ENCODE measurements at regions of chr17 and their contacts with region 1.

Region 1: DNA sequence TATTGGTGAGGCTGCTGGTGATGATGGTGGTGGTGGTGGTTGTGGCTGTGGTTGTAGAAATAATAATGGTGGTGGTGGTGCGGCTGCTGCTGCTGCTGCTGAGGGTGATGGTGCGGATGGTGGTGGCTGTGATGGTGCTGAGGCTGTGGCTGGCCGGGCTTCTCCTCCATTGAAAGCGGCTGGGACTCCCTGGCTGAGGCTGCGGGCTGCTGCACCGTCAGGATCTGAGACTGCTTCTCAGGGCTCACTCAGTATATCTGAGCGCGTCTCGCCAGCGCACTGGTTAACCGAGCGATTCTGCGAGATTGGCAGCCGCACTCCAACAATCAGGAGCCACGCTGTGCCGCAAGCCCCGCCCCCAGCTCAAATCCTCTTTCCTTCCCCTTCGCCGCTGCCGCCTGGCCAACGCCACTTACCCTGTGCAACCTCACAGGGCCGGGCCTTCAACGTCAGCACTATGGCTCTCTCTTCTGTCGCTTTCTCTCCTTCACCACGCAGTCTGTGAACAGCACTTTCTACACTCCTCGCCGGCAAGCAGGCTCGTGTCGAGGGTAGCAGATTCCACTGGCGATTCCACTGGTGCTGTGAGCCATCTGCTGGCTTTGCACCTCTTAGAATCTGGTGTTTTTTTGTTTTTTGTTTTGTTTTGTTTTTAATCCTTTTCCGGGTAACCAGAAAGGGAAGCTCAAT is at the start of gene NUFIP2:
- DNase-seq: peak; percentile 99
- ATAC-seq: peak; percentile 84
- H3K4me3 ChIP-seq: peak within 1 kb of the TSS; percentile 89 to 95 (median 91)
- H3K4me3 Mint-ChIP-seq: peak within 1 kb of the TSS; percentile 97
- H3K27ac ChIP-seq: peak within 1 kb of the TSS; percentile 82 to 94
- H3K27ac Mint-ChIP-seq: peak within 1 kb of the TSS; percentile 97
- H3K4me1 ChIP-seq: peaks cover 30 to 34% of the 10 kb centered on the region in 2 donors
- H3K4me1 Mint-ChIP-seq: peaks cover 30% of the 10 kb centered on the region
- H3K27me3 ChIP-seq: no peaks in the 10 kb centered on the region
- H3K27me3 Mint-ChIP-seq: no peaks in the 10 kb centered on the region
- CTCF ChIP-seq: no peak
- total RNA-seq, gene NUFIP2: 76.5 and 83.5 TPM in 2 replicates

Region 2: GRCh38 chr17:29124117-29124924 is 169.7 kb before region 1 on chr17:
- CTCF ChIA-PET with region 1: interaction called, 16 read pairs
- POLR2A ChIA-PET with region 1: no interaction called
- intact Hi-C with region 1: no loop called
- DNase-seq: peak; percentile 63
- ATAC-seq: peak; percentile 84
- H3K4me3 ChIP-seq: no peak overlapping the region
- H3K4me3 Mint-ChIP-seq: no peak overlapping the region
- H3K27ac ChIP-seq: no peak overlapping the region
- H3K27ac Mint-ChIP-seq: peak overlapping the region; percentile 7
- H3K4me1 ChIP-seq: peaks cover 0 to 4% of the 10 kb centered on the region in 2 donors
- H3K4me1 Mint-ChIP-seq: no peaks in the 10 kb centered on the region
- H3K27me3 ChIP-seq: no peaks in the 10 kb centered on the region
- H3K27me3 Mint-ChIP-seq: no peaks in the 10 kb centered on the region
- CTCF ChIP-seq: peak; percentile 60

Region 3: DNA sequence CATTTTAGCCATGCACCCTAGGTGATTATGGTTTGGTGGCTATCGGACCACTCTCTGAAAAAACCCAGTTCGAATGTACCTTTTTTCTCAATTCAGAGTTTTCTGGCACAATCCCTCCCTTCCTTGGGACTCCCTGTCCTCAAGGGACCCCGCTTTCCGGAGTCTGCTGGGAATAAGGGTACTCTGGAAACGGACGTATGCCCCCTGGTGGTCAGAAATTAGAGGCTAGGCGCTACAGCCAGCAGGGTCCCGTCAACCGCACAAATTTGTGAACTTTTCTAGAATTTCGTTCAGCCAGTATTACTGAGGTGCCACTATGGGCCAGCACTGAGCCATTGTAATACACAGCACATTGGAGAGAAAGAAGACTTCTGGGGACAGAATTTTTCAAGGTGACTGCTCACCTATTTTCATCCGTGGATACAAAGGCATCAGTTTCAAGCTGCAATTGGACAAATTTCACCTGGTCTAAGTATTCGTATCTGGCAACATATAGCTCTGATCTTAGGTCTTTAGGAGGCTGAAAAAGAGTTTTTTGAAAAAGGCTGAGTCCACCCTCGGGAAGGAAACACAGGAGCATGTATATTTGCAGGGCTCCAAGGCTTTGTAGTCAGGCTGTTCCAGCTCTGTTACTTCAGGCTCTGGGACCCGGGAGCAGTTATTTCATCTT is 74.5 kb before region 1 on chr17:
- CTCF ChIA-PET with region 1: interaction called, 13 read pairs
- POLR2A ChIA-PET with region 1: no interaction called
- intact Hi-C with region 1: loop called (anchors 2 kb)
- DNase-seq: peak; percentile 82
- ATAC-seq: peak; percentile 91
- H3K4me3 ChIP-seq: no peak overlapping the region
- H3K4me3 Mint-ChIP-seq: no peak overlapping the region
- H3K27ac ChIP-seq: no peak overlapping the region
- H3K27ac Mint-ChIP-seq: no peak overlapping the region
- H3K4me1 ChIP-seq: peaks cover 5 to 7% of the 10 kb centered on the region in 2 donors
- H3K4me1 Mint-ChIP-seq: peaks cover 8% of the 10 kb centered on the region
- H3K27me3 ChIP-seq: no peaks in the 10 kb centered on the region
- H3K27me3 Mint-ChIP-seq: peaks cover 5% of the 10 kb centered on the region
- CTCF ChIP-seq: peak; percentile 99

Region 4: DNA sequence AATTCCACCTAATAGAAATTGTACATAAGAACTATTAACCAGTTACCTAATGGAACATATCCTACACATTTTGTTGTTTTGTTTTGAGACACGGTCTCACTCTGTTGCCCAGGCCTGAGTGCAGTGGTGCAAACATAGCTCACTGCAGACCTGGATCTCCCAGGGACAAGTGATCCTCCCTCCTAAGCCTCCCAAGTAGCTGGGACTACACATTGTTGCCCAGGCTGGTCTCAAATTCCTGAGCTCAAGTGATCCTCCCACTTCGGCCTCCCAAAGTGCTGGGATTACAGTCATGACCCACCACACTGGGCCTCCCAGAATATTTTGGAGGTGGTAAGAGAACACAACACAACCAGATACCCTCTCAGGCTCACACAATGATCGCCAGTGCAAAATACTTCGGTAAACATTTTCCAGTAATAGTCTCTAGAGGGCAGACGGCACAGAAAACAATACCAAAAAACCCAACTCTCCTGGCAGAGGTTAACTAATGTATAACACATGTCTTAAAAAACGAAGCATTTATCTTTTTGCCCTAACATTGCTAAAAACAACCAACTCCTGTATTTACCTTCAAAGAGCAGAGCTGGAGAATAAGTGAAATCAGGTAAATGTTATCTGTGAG is 10.7 kb before region 1 on chr17:
- CTCF ChIA-PET with region 1: interaction called, 13 read pairs
- POLR2A ChIA-PET with region 1: interaction called, 8 read pairs
- intact Hi-C with region 1: no loop called
- DNase-seq: no peak
- ATAC-seq: no peak
- H3K4me3 ChIP-seq: no peak overlapping the region
- H3K4me3 Mint-ChIP-seq: peak overlapping the region; percentile 12
- H3K27ac ChIP-seq: peak overlapping the region in 1 of 2 donors; percentile 40
- H3K27ac Mint-ChIP-seq: peak overlapping the region; percentile 8
- H3K4me1 ChIP-seq: peaks cover 8 to 17% of the 10 kb centered on the region in 2 donors
- H3K4me1 Mint-ChIP-seq: peaks cover 44% of the 10 kb centered on the region
- H3K27me3 ChIP-seq: no peaks in the 10 kb centered on the region
- H3K27me3 Mint-ChIP-seq: no peaks in the 10 kb centered on the region
- CTCF ChIP-seq: no peak

Region 5: DNA sequence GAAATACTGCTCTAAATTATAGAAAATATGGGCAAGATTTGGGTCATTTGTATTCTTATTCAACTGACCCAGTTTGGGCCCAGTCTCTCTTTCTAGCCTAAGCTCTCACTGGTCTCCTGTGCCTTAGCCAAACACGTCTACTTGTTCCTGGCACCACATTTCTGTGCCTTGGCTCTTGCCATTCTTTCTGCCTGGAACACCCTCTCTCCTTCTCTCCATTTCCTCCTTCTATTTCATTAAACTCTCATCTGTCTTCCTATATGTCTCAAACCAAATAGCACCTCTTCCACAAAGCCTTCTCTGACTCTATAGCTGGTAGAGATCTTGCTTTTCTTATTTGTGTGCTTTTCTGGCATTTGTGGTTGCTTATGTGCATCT is 37.7 kb after region 1 on chr17:
- CTCF ChIA-PET with region 1: no interaction called
- POLR2A ChIA-PET with region 1: no interaction called
- intact Hi-C with region 1: no loop called
- DNase-seq: no peak
- ATAC-seq: no peak
- H3K4me3 ChIP-seq: no peak overlapping the region
- H3K4me3 Mint-ChIP-seq: no peak overlapping the region
- H3K27ac ChIP-seq: no peak overlapping the region
- H3K27ac Mint-ChIP-seq: no peak overlapping the region
- H3K4me1 ChIP-seq: no peaks in the 10 kb centered on the region
- H3K4me1 Mint-ChIP-seq: no peaks in the 10 kb centered on the region
- H3K27me3 ChIP-seq: no peaks in the 10 kb centered on the region
- H3K27me3 Mint-ChIP-seq: no peaks in the 10 kb centered on the region
- CTCF ChIP-seq: no peak

Region 6: DNA sequence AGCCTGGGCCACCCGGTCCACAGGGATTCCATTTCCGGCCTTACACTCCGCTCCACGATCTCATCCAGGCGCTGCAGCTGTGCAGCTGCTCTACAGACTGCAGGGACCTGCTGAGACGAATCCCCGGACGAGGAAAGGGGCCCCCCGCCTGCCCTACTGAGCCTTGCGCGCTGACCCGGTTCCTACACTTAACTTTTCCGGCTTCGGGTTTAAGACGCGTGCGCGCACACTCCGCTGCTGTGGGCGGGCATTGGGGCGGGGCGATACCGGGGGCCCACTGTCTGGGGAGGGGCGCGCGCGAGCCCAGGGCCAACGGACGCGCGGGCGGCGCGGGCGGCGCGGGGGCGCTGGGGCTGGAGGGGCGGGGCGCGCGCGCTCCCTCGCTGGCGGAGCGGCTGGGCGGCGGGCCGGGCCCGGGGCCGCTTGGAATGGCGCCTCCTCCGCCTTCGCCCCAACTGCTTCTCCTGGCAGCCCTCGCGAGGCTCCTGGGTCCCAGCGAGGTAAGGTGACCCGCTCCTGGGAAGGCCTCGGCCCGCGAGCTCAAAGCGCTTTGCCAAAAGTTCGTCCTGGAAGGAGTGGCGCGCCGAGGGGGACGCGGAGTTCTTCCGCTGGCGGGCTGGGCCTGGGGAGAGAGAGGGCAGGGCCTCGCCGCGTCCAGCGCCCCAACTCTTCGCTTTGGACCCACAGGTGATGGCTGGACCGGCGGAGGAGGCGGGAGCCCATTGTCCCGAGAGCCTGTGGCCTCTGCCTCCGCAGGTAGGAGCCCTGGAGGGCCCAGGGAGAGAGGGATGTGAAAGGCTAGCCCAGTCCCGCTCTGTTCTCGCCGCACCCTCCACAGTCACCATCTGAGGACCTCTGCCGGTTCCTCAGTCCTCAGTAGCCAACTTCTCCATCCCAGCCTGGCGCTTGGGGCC is 274.6 kb after region 1 on chr17 and contains the start of gene TP53I13:
- CTCF ChIA-PET with region 1: no interaction called
- POLR2A ChIA-PET with region 1: interaction called, 3 read pairs
- intact Hi-C with region 1: loop called (anchors 5 kb)
- DNase-seq: peak; percentile 92
- ATAC-seq: peak; percentile 60
- H3K4me3 ChIP-seq: peak within 1 kb of the TSS; percentile 71 to 99 (median 80)
- H3K4me3 Mint-ChIP-seq: peak within 1 kb of the TSS; percentile 99
- H3K27ac ChIP-seq: peak within 1 kb of the TSS; percentile 71 to 76
- H3K27ac Mint-ChIP-seq: peak within 1 kb of the TSS; percentile 97
- H3K4me1 ChIP-seq: peaks cover 27 to 40% of the 10 kb centered on the region in 2 donors
- H3K4me1 Mint-ChIP-seq: peaks cover 39% of the 10 kb centered on the region
- H3K27me3 ChIP-seq: no peaks in the 10 kb centered on the region
- H3K27me3 Mint-ChIP-seq: no peaks in the 10 kb centered on the region
- CTCF ChIP-seq: no peak
- total RNA-seq, gene TP53I13: 220 and 224 TPM in 2 replicates

Region 7: DNA sequence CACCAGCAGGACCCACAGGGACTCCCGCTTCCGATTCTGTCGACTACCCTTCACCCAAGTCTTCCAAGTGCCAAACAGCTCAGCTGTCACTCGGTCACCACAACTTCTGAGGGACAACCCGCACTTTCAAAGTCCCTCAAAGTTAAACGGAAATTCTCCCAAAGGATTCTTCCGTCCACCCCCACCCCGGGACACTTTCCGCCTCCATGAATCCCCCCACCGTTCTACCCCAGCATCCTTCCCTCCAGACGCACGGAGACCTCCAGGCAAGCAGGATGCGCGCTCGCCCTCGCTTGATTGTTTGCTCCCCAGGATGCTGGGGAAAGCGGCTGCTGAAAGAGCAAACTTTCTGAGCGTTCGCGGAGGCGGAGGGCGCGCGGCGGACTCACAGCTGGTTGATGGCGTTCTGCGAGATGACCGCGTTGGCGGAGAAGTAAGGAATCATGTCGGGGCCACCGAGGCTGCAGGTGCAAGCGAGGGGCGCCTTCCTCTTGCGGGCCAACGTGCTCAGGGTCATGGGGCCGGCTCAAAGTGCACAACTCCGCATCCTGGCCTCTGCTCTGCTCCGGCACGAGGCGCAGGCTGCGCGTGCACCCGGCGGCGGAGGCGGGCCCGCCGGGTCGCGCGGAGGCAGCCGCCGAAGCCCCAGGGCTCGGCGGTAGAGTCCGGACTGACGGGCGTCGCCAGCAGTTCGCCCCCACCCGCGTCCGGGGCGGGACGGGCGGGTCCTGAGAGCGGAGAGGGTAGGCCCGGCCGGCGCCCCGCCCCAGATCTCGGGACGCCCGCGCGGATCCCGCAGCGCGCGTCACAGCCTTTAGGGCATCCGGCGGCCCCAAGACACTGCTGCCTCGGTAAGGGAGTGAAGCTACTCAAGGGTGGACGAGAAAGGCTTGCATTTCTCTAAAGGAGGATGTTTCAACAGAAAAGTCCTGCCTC is 467.0 kb after region 1 on chr17:
- CTCF ChIA-PET with region 1: no interaction called
- POLR2A ChIA-PET with region 1: no interaction called
- intact Hi-C with region 1: loop called (anchors 5 kb)
- DNase-seq: peak; percentile 97
- ATAC-seq: peak; percentile 87
- H3K4me3 ChIP-seq: peak overlapping the region; percentile 83 to 96 (median 94)
- H3K4me3 Mint-ChIP-seq: peak overlapping the region; percentile 90
- H3K27ac ChIP-seq: peak overlapping the region; percentile 80 to 83
- H3K27ac Mint-ChIP-seq: peak overlapping the region; percentile 90
- H3K4me1 ChIP-seq: peaks cover 34 to 41% of the 10 kb centered on the region in 2 donors
- H3K4me1 Mint-ChIP-seq: peaks cover 38% of the 10 kb centered on the region
- H3K27me3 ChIP-seq: no peaks in the 10 kb centered on the region
- H3K27me3 Mint-ChIP-seq: no peaks in the 10 kb centered on the region
- CTCF ChIP-seq: no peak

Measured in B cell (primary cell).